Activated CD4-positive, alpha-beta T cell treated with anti-CD3 and anti-CD28 coated beads for 36 hours (primary cell): ENCODE measurements at regions of chr1 and their contacts with region 1.

Region 1: DNA sequence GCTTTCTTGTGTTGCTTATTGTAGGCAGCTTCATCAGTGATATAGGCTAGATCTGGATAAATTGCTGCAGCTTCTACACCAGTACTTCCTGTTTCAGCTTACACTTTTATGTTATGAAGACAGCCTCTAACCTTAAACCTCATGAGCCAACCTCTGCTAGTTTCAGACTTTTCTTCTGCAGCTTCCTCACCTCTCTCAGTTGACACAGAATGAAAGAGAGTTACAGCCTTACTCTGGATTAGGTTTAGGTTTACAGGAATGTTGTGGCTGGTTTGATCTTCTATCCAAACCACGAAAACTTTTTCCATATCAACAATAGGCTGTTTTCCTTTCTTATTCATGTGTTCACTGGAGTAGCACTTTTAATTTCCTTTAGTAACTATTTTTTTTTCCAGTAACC is 76.9 kb upstream of the RNPC3 start:
- DNase-seq: no peak
- ATAC-seq: peak; percentile 74
- H3K4me3 Mint-ChIP-seq: no peak overlapping the region
- H3K27ac Mint-ChIP-seq: no peak overlapping the region
- H3K4me1 Mint-ChIP-seq: peaks cover 6% of the 10 kb centered on the region
- H3K27me3 Mint-ChIP-seq: no peaks in the 10 kb centered on the region

Region 2: DNA sequence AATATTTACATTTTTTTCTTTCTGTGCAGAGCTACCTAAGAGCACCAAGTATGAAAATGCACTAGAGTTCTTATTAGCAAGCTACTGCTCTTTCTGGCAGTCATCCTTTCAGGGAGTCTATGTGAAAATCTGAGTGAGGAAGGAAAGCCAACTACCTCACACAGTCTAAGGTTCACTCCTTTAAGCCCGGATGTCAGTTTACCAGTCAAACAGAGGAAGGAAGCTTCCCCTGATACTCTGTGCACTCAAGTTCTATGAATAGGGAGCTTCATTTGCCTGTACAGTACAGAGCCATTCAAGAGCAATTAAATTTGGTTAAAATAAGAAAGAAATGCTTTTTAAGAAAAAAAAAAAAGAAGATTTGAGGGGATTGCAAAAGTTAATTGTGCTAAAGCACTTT is 347.2 kb before region 1 on chr1:
- CTCF ChIA-PET with region 1: no interaction called
- POLR2A ChIA-PET with region 1: no interaction called
- intact Hi-C with region 1: loop called in 1 of 2 experiments (anchors 5 kb)
- DNase-seq: no peak
- ATAC-seq: no peak
- H3K4me3 Mint-ChIP-seq: no peak overlapping the region
- H3K27ac Mint-ChIP-seq: no peak overlapping the region
- H3K4me1 Mint-ChIP-seq: peaks cover 2% of the 10 kb centered on the region
- H3K27me3 Mint-ChIP-seq: peaks cover under 1% of the 10 kb centered on the region

Region 3: DNA sequence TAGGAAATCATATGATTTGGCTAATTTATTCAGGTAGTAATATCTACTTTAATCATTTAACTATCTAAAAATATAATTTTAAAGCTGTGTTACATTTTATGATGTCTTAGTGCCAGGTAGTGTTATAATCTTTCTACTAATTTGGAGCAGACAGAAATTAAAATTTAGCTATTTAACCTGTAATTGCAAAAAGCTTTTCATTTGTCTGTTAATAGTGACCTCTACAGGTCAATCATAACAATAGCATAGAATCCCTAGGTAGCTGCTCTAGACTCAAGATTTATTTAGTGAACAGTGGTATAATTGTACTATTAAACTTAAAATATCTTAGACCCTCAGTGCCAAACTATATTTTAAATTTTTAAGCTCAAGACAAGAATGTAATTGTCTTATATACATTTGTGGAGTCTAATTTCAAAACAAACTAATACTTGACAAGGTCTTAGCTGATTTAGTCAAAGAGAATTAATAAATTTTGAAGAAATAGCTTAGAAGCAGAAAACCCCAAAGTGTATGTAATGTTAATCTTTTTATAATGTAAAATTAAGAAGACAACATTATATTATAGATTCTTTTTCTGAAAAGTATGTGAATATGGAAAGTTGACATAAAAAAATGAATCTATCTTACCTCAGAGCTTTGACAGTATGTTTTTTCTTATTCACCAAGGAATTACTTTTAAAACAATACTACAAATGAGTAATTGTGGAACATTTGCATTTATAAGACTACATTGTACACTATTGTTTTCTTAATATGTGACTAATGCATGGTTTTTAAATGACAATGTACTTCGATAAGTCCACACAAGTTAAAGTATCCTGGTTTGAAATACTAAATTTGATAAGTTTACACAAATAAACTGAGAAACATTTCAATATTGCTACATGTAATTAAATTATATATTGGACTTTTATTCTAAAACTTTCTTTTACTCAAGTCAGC is 12.9 kb after region 1 on chr1:
- CTCF ChIA-PET with region 1: interaction called, 10 read pairs
- POLR2A ChIA-PET with region 1: no interaction called
- intact Hi-C with region 1: no loop called
- DNase-seq: no peak
- ATAC-seq: no peak
- H3K4me3 Mint-ChIP-seq: no peak overlapping the region
- H3K27ac Mint-ChIP-seq: no peak overlapping the region
- H3K4me1 Mint-ChIP-seq: no peaks in the 10 kb centered on the region
- H3K27me3 Mint-ChIP-seq: peaks cover 3% of the 10 kb centered on the region

Region 4: DNA sequence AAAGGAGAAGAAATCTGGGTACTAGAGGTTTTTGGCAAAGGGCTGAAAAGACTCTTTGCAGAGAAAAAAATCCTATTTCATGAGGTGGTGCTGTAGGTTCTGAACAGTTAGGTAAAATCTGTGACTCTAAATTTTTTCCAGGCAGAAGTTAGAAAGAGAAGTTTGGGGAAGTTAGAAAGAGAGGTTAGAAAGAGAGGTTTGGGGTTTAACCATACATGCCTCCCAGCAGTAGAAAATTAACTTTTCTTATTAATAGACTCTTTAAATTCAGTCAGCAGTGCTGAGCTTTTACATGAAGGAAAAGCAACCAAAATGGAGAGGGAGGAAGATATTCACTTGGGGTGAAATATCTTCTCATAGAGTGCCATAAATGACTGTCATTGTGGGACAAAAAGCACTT is 313.3 kb after region 1 on chr1:
- CTCF ChIA-PET with region 1: no interaction called
- POLR2A ChIA-PET with region 1: no interaction called
- intact Hi-C with region 1: no loop called
- DNase-seq: no peak
- ATAC-seq: no peak
- H3K4me3 Mint-ChIP-seq: no peak overlapping the region
- H3K27ac Mint-ChIP-seq: no peak overlapping the region
- H3K4me1 Mint-ChIP-seq: no peaks in the 10 kb centered on the region
- H3K27me3 Mint-ChIP-seq: no peaks in the 10 kb centered on the region